Ascending aorta (tissue), 2 donors: ENCODE measurements at regions of chr10 and their contacts with region 1.

Region 1: DNA sequence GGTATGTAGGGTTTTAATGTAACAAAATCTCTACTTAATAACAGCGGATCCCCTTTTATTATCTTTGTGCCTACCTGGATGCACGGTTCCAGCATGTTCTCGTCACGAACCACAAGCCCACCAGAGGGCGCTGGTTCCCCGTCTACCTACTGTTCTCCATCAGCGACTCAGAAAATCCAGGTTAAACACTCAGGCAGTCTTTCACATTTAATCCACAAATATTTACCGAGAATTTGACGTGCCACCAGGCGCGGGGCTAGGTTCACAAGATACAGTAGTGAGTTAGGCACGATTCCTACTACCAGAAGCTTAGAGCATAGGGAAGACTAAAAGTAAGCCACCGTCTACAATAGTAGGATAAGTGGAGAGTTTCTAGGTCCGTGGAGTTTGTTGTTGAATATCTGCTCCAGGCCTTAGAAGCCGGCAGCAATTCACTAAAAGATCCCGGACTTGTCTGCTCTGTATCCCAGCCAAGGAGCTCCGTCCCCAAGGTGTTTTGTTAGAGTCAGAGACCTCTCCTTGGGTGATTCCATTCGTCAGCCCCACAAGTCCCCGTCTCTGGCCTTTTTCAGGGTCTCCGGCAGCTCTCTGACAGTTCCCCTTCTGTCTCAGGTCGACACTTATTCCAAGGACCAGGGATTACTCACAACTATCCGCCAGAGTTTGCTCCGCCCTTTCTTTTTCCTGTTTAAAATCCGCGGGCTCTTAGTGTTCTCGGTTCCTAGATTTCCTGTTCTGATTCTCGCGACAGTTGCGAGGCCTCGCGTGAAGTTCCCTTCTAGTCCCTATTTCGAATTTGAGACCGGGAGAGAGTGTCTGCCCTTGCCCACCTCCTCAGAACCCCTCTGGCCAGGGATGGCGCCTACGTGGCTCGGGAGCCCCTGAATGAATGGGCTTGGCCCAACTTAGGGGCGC is 1.5 kb upstream of the KAZALD1 start:
- DNase-seq: peak; percentile 82 to 96
- H3K4me3 ChIP-seq: peak overlapping the region; percentile 60 to 79
- H3K27ac ChIP-seq: peak overlapping the region; percentile 96 to 98
- H3K4me1 ChIP-seq: peaks cover 2 to 33% of the 10 kb centered on the region in 2 donors
- H3K27me3 ChIP-seq: no peaks in the 10 kb centered on the region
- CTCF ChIP-seq: peak; percentile 75 to 89 (median 78)

Region 2: GRCh38 chr10:100912605-100913469 is 147.5 kb before region 1 on chr10 and contains the start of gene SLF2:
- intact Hi-C with region 1: loop called (anchors 5 kb)
- DNase-seq: peak; percentile 92 to 99
- H3K4me3 ChIP-seq: peak within 1 kb of the TSS; percentile 84 to 89
- H3K27ac ChIP-seq: peak within 1 kb of the TSS; percentile 89 to 90
- H3K4me1 ChIP-seq: peaks cover 5 to 20% of the 10 kb centered on the region in 2 donors
- H3K27me3 ChIP-seq: no peaks in the 10 kb centered on the region
- CTCF ChIP-seq: no peak
- total RNA-seq, gene SLF2: 3.1 TPM

Region 3: GRCh38 chr10:100939763-100940344 is 120.4 kb before region 1 on chr10:
- intact Hi-C with region 1: no loop called
- DNase-seq: no peak
- H3K4me3 ChIP-seq: no peak overlapping the region
- H3K27ac ChIP-seq: no peak overlapping the region
- H3K4me1 ChIP-seq: no peaks in the 10 kb centered on the region
- H3K27me3 ChIP-seq: no peaks in the 10 kb centered on the region
- CTCF ChIP-seq: no peak

Region 4: GRCh38 chr10:101031128-101031795 is 29.0 kb before region 1 on chr10 and contains the starts of genes PDZD7 and SFXN3:
- intact Hi-C with region 1: loop called (anchors 1 kb)
- DNase-seq: peak; percentile 80 to 97
- H3K4me3 ChIP-seq: peak within 1 kb of the TSS; percentile 72 to 92
- H3K27ac ChIP-seq: peak within 1 kb of the TSS; percentile 99
- H3K4me1 ChIP-seq: peaks cover 20 to 30% of the 10 kb centered on the region in 2 donors
- H3K27me3 ChIP-seq: no peaks in the 10 kb centered on the region
- CTCF ChIP-seq: no peak
- total RNA-seq, gene PDZD7: 0.53 TPM
- total RNA-seq, gene SFXN3: 72.4 TPM

Region 5: DNA sequence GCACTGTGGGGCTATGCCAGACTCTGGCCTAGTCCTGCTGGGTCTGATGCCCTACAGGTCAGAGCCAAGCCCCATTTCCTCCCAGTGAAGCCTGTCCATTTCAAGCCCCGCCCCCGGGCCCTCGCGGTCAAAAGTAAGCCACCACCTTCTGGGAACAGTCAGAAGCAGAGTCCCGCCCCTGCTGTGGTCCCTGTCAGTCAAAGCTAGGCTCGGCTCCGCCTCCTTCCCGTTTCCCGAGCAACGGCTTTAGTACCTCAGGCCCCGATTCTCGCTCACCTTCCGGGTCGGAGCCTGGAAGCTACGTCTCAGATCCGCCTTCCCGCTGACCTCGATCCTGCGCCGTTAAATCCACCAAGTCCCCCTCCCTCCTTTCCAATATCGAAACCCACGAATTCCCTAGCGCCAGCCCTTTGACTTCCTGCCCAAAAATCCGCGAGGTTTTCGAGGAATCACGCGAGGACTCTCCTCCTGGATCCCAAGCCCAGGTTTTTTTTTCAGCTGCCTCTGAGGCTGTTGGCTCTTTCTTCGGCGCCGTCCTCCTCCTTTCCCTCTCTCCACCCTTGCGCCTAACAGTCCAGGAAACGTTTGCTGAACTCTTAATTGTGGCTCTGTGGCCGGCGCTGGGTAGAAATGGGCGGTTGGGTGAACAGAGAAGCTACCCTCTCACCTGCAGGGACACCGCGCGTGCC is 17.5 kb before region 1 on chr10:
- intact Hi-C with region 1: loop called (anchors 1 kb)
- DNase-seq: peak; percentile 96 to 99
- H3K4me3 ChIP-seq: peak overlapping the region; percentile 56 to 64
- H3K27ac ChIP-seq: peak overlapping the region; percentile 87 to 93
- H3K4me1 ChIP-seq: peaks cover 0 to 18% of the 10 kb centered on the region in 2 donors
- H3K27me3 ChIP-seq: peaks cover 6% of the 10 kb centered on the region
- CTCF ChIP-seq: no peak

Region 6: GRCh38 chr10:102055647-102056419 is 995.5 kb after region 1 on chr10 and contains the start of gene ARMH3:
- intact Hi-C with region 1: loop called (anchors 10 kb)
- DNase-seq: peak; percentile 79 to 97
- H3K4me3 ChIP-seq: peak within 1 kb of the TSS; percentile 84 to 85
- H3K27ac ChIP-seq: peak within 1 kb of the TSS; percentile 92 to 93
- H3K4me1 ChIP-seq: peaks cover 0 to 13% of the 10 kb centered on the region in 2 donors
- H3K27me3 ChIP-seq: no peaks in the 10 kb centered on the region
- CTCF ChIP-seq: no peak
- total RNA-seq, gene ARMH3: 4.5 TPM